ENCODE measurements at regions of chr2 and their contacts with region 1.

Region 1: DNA sequence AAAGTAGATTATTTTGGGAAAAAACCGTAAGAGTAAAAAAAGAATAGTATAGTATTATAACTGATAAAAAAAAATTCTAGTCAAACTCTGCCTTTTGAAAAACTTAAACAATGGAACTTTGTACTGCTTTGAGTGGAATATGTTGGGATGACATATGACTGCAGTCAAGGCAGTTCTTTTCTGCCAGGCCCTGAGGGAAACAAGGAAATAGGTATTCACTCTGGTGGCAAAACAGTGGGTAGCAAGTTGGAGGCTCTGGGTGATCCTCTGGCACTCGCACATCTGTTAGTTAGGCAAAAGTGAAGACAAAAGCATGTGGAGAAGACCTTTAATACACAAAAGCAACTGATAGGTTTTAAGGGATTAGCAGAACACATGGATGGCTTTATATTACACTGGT is 102.2 kb downstream of the ARHGEF33 start:
- DNase-seq: no peak
- ATAC-seq: no peak
- H3K4me3 ChIP-seq: no peak overlapping the region
- H3K27ac ChIP-seq: no peak overlapping the region
- H3K4me1 ChIP-seq: no peaks in the 10 kb centered on the region
- H3K27me3 ChIP-seq: no peaks in the 10 kb centered on the region
- CTCF ChIP-seq: no peak

Region 2: DNA sequence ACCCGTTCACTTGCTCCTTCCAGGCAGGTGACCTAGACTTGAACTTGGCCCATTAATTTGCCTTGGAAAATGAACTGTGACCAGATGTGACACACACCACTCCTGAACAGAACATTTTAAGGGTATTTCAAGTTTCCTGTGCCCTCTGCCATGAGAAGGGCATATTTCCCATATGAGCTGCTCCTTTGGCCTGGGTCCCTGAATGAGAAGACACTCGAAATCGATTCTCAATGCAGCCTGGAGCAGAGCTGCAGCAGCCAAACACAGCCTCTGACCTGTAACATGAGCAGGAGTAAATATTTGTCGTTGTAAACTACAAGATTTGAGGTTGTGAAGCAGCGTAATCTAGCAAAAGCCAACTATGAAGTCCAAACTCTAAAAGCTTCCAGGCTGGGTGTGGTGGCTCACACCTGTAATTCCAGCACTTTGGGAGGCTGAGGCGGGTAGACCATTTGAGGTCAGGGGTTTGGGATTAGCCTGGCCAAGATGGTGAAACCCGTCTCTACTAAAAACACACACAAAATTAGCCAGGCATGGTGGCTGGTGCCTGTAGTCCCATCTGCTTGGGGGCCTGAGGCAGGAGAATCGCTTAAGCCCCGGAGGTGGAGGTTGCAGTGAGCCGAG is 159.1 kb after region 1 on chr2:
- CTCF ChIA-PET with region 1: no interaction called
- POLR2A ChIA-PET with region 1: interaction called, 10 read pairs
- intact Hi-C with region 1: no loop called
- DNase-seq: peak; percentile 10
- ATAC-seq: peak; percentile 27
- H3K4me3 ChIP-seq: no peak overlapping the region
- H3K27ac ChIP-seq: no peak overlapping the region
- H3K4me1 ChIP-seq: peaks cover 7% of the 10 kb centered on the region
- H3K27me3 ChIP-seq: no peaks in the 10 kb centered on the region
- CTCF ChIP-seq: no peak

Region 3: GRCh38 chr2:39216346-39217191 is 224.7 kb after region 1 on chr2:
- CTCF ChIA-PET with region 1: no interaction called
- POLR2A ChIA-PET with region 1: no interaction called
- intact Hi-C with region 1: no loop called
- DNase-seq: no peak
- ATAC-seq: no peak
- H3K4me3 ChIP-seq: no peak overlapping the region
- H3K27ac ChIP-seq: no peak overlapping the region
- H3K4me1 ChIP-seq: no peaks in the 10 kb centered on the region
- H3K27me3 ChIP-seq: no peaks in the 10 kb centered on the region
- CTCF ChIP-seq: no peak

Region 4: DNA sequence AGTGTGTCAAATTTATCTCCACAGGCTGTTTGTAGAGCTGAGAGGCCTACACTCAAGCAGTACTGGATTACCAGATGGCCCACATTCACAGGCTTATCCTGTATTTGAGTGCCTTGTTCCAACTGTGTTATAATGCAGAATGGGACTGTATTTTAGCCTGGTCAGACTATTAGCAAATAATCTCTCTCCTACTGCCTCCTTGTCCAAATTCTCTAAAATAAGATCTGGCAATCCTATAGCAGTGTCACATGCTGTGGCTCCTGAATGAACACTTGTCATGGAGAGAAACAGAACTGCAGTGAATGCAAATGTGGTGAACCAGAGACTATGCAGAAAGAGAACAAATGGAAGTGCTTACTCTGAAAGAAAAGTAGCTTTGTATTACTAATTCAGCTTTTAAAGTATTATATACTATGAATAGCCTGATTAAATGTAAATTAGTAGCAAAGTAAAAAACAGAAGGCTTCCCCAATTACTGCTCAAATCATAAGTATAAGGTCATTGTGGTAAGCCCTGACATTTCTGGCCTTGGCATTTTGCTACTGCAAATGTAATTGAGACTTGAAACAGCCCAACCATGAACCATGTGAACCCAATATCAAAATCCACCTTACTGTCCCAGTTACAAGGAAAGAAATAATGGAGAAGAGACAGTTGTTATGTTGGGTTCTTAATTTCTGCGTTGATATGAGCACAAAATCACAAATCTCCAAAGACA is 365.2 kb after region 1 on chr2:
- CTCF ChIA-PET with region 1: no interaction called
- POLR2A ChIA-PET with region 1: no interaction called
- intact Hi-C with region 1: no loop called
- DNase-seq: no peak
- ATAC-seq: no peak
- H3K4me3 ChIP-seq: no peak overlapping the region
- H3K27ac ChIP-seq: no peak overlapping the region
- H3K4me1 ChIP-seq: no peaks in the 10 kb centered on the region
- H3K27me3 ChIP-seq: no peaks in the 10 kb centered on the region
- CTCF ChIP-seq: no peak

Measured in PC-3 (cell line).